Heart left ventricle (tissue), 16 donors: ENCODE measurements at regions of chr6 and their contacts with region 1.

Region 1: DNA sequence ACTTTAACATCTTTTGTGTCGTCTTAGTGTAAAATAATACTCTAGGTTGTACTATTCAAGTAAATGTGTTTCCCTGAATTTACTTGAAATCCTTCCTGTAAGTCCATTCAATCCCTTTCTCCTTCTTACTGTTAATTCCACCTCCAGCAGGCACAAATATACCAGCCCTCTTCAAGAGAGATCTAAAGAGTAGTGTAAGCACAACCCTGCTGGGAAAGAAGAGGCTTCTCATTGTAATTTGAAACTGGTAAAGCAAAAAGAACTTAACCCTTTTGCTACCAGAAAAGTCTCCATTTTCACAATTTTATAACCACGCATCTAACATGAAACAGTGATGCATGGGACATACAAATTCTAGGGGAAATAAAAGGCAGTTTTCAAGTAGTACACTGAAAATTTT is at the start of gene BMP5:
- DNase-seq: no peak
- ATAC-seq: no peak
- H3K4me3 ChIP-seq: peak within 1 kb of the TSS; percentile 6 to 52 (median 34)
- H3K27ac ChIP-seq: peak within 1 kb of the TSS in 9 of 12 donors; percentile 4 to 59 (median 40)
- H3K4me1 ChIP-seq: no peaks in the 10 kb centered on the region
- H3K27me3 ChIP-seq: peaks cover 0 to 3% (median 0%) of the 10 kb centered on the region in 9 donors
- CTCF ChIP-seq: no peak
- POLR2A ChIP-seq: no peak
- total RNA-seq, gene BMP5: 0.86 to 5.8 (median 2.2) TPM

Region 2: DNA sequence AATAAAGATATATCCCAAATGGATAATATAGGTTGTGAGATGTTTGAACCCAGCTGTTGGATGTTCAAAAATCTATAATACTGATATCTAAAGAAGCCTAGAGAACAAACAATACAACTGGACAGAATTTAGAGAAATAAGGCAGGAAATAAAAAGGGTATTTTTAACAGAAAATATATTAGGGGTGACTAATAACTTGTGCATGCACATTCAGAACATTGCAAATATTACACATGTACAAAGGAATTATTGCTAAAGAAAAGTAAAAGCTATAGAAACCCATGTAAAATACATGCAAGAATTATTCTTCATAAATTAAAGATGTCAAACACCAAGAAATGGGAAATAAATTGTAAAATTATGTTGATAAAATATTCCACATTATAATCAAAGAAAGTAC is 733.8 kb before region 1 on chr6:
- intact Hi-C with region 1: no loop called
- DNase-seq: no peak
- ATAC-seq: no peak
- H3K4me3 ChIP-seq: no peak overlapping the region
- H3K27ac ChIP-seq: no peak overlapping the region
- H3K4me1 ChIP-seq: no peaks in the 10 kb centered on the region
- H3K27me3 ChIP-seq: no peaks in the 10 kb centered on the region
- CTCF ChIP-seq: no peak
- POLR2A ChIP-seq: no peak

Region 3: GRCh38 chr6:55578537-55579363 is 296.6 kb before region 1 on chr6 and contains the start of gene HMGCLL1:
- intact Hi-C with region 1: loop called in 1 of 10 experiments (anchors 10 kb)
- DNase-seq: peak; percentile 37 to 77 (median 54)
- ATAC-seq: peak; percentile 77 to 89 (median 86)
- H3K4me3 ChIP-seq: peak within 1 kb of the TSS; percentile 19 to 67 (median 55)
- H3K27ac ChIP-seq: peak within 1 kb of the TSS; percentile 33 to 78 (median 58)
- H3K4me1 ChIP-seq: peaks cover 0 to 6% (median 0%) of the 10 kb centered on the region in 12 donors
- H3K27me3 ChIP-seq: peaks cover 0 to 7% (median 0%) of the 10 kb centered on the region in 9 donors
- CTCF ChIP-seq: peak in 1 of 12 donors; percentile 18
- POLR2A ChIP-seq: no peak
- total RNA-seq, gene HMGCLL1: 0.44 to 1.6 (median 0.89) TPM

Region 4: DNA sequence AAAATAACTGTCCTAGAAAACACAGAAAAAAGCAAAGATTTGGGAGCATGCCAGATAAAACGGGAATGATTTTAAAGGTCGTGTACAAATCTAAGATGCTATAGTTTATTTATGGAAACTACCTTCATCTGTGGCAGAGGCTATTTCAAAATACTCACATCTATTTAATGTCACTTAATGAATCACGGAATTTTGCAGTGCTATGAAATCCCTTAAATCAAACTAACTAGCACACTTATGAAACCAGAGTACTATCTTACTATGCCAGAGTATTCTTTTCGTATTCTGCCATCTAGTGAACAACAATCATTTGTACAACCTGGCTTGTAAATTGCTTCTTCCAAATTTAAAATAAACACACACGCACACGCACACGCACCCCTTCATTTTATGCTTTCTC is 77.9 kb after region 1 on chr6:
- intact Hi-C with region 1: loop called in 1 of 10 experiments (anchors 10 kb)
- DNase-seq: no peak
- ATAC-seq: peak in 3 of 4 donors; percentile 33 to 67 (median 45)
- H3K4me3 ChIP-seq: peak overlapping the region in 9 of 12 donors; percentile 14 to 50 (median 26)
- H3K27ac ChIP-seq: no peak overlapping the region
- H3K4me1 ChIP-seq: peaks cover 0 to 6% (median 0%) of the 10 kb centered on the region in 12 donors
- H3K27me3 ChIP-seq: no peaks in the 10 kb centered on the region
- CTCF ChIP-seq: peak in 11 of 12 donors; percentile 11 to 58 (median 45)
- POLR2A ChIP-seq: no peak